ENCODE measurements at regions of chr18 and their contacts with region 1.

Region 1: DNA sequence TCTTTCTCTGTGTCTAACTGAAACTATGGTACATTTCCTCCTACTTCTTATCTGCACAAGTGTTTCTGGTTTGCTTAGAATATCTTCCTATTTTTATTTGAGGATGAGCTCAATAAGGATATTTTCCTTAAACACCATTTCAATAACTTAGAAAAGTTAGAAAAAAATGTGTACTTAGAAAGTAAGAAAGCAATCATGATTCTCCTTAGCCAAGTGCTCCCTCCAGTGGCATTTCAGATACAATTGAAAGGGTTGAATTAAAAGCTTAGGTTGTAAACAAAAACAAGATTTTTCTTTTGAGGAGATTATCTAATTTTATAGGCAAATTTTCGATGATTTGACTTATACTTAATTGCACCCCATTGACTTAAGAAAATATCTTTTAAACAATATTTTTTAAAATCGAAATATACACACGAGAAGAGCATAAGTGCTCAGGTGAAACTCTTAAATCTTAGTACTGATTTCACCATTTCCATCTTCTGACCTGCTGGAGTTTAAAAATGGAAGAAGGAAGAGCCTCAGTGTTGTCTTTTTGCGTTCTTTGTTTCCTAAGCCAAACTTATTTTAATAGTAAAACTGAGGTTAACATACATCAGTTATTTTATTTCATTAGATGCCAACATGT is 26.9 kb downstream of the C18orf63 start:
- DNase-seq: peak in 2 of 5 donors; percentile 33 to 48
- H3K4me3 ChIP-seq: no peak overlapping the region
- H3K4me3 Mint-ChIP-seq: no peak overlapping the region
- H3K27ac ChIP-seq: no peak overlapping the region
- H3K27ac Mint-ChIP-seq: no peak overlapping the region
- H3K4me1 ChIP-seq: no peaks in the 10 kb centered on the region
- H3K4me1 Mint-ChIP-seq: no peaks in the 10 kb centered on the region
- H3K27me3 ChIP-seq: no peaks in the 10 kb centered on the region
- H3K27me3 Mint-ChIP-seq: peaks cover 0 to 16% of the 10 kb centered on the region in 2 donors

Region 2: GRCh38 chr18:74196220-74197119 is 146.1 kb before region 1 on chr18:
- CTCF ChIA-PET with region 1: interaction called, 31 read pairs
- POLR2A ChIA-PET with region 1: interaction called, 4 read pairs
- DNase-seq: peak; percentile 13 to 74 (median 58)
- H3K4me3 ChIP-seq: peak overlapping the region; percentile 18
- H3K4me3 Mint-ChIP-seq: peak overlapping the region; percentile 34 to 87 (median 79)
- H3K27ac ChIP-seq: no peak overlapping the region
- H3K27ac Mint-ChIP-seq: peak overlapping the region in 7 of 8 donors; percentile 68 to 96 (median 81)
- H3K4me1 ChIP-seq: no peaks in the 10 kb centered on the region
- H3K4me1 Mint-ChIP-seq: peaks cover 0 to 6% (median 3%) of the 10 kb centered on the region in 3 donors
- H3K27me3 ChIP-seq: no peaks in the 10 kb centered on the region
- H3K27me3 Mint-ChIP-seq: peaks cover 1 to 23% of the 10 kb centered on the region in 2 donors

Region 3: DNA sequence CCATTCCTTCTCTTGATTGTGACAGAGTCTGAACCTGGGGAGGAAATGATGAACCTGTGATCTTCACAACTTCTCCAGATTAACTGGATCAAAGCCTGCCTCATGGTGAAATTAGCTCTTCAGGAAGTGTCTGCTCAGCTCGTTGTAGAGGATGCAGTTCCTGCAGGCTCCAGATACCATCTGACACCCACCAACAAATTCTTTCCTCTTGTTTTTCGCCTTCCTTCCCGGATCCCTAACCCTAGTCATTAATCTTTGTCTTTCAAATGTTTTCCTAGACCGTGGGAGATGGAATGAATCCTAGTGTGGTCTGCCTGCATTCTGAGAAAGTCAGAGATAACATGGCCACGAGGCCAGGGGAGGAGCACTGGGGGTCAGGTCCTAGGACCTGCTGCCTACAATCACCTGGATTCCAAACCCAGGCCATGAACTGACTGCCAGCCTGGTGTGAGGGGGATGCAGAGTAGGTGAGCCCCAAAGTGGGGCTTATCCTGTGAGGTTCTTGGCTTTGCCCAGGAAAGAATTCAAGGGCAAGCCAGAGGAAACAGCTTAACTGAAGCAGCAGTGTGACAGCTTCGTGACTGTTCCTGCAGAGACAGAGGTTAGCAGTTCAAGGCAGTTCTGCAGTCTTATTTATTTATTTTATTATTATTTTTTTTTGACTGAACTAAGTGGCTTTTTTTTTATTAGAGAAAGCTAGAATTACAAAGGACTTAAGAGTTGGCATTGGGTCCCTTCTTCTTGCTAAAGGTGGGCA is 46.8 kb after region 1 on chr18:
- CTCF ChIA-PET with region 1: no interaction called
- POLR2A ChIA-PET with region 1: no interaction called
- DNase-seq: no peak
- H3K4me3 ChIP-seq: no peak overlapping the region
- H3K4me3 Mint-ChIP-seq: no peak overlapping the region
- H3K27ac ChIP-seq: no peak overlapping the region
- H3K27ac Mint-ChIP-seq: peak overlapping the region in 1 of 8 donors; percentile 45
- H3K4me1 ChIP-seq: peaks cover 9% of the 10 kb centered on the region
- H3K4me1 Mint-ChIP-seq: peaks cover 3 to 9% (median 5%) of the 10 kb centered on the region in 3 donors
- H3K27me3 ChIP-seq: peaks cover 7% of the 10 kb centered on the region
- H3K27me3 Mint-ChIP-seq: peaks cover 2 to 15% of the 10 kb centered on the region in 2 donors